IMR-90 (cell line): ENCODE measurements at regions of chr13 and their contacts with region 1.

Region 1: GRCh38 chr13:23871616-23872220 is 17.5 kb downstream of the MIPEP start:
- DNase-seq: peak; percentile 59
- ATAC-seq: no peak
- H3K4me3 ChIP-seq: no peak overlapping the region
- H3K27ac ChIP-seq: peak overlapping the region; percentile 31; the same call in 1 of the 2 replicates
- H3K4me1 ChIP-seq: peaks cover 14% of the 10 kb centered on the region
- H3K27me3 ChIP-seq: no peaks in the 10 kb centered on the region
- CTCF ChIP-seq: peak; percentile 62
- POLR2A ChIP-seq: no peak
- RAD21 ChIP-seq: peak; percentile 76

Region 2: DNA sequence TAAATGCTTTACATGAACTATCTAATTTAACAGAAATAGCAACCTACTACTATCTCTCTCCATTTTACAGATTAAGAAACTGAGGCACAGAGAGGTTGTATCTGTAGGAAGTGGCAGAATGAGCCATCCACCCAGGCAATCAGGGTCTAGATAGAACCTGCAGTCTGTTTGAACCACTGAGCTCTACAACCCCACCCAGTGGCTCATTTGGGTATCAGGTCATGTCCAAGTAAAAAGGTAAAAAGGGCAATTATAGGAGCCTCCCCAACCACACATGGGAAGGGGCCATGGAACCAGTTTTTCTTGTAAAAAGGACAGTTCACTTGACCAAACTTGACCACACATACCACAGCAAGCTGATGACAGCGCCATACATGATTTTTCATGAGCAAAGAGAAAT is 783.8 kb before region 1 on chr13:
- CTCF ChIA-PET with region 1: no interaction called
- POLR2A ChIA-PET with region 1: no interaction called
- dilution Hi-C with region 1: no loop called
- in situ Hi-C with region 1: no loop called
- intact Hi-C with region 1: no loop called
- DNase-seq: peak; percentile 20
- ATAC-seq: peak; percentile 49; the same call in 1 of the 2 replicates
- H3K4me3 ChIP-seq: no peak overlapping the region
- H3K27ac ChIP-seq: no peak overlapping the region
- H3K4me1 ChIP-seq: no peaks in the 10 kb centered on the region
- H3K27me3 ChIP-seq: no peaks in the 10 kb centered on the region
- CTCF ChIP-seq: peak; percentile 31
- POLR2A ChIP-seq: no peak
- RAD21 ChIP-seq: no peak

Region 3: DNA sequence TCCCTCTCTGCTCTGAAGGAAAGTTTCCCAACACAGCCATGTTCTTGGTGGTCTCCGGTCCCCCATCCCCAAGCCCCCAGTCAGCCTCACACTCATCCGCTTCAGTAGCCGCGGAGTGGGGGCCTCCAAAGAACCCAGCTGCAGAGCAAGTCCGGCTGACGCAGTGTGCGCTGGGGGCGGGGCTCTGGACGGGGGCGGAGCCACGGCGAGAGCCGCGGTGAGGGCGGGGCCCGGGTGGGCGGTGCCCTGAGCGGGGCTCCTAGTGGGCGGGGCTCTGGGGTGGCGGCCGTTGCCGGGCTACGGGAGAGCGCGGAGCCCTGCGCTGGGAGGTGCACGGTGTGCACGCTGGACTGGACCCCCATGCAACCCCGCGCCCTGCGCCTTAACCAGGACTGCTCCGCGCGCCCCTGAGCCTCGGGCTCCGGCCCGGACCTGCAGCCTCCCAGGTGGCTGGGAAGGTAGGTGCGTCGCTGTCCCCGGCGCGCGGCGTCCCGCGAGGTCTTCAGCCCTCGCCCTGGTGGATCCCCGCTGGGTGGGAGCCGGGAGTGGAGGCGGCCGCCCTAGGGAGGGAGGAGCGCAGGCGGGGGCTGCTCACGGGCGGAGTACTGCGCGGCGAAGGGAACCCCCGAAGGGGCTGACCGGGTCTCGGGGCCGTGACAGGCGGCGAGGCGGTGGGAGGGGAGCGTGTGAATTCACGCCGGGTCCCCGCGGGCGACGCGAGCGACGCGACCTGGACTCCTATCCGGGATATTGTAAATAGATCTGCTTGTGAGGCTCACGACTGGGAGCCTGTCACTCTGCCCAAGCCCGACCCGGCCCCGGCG is 292.4 kb before region 1 on chr13:
- CTCF ChIA-PET with region 1: interaction called, 3 read pairs
- POLR2A ChIA-PET with region 1: no interaction called
- dilution Hi-C with region 1: no loop called
- in situ Hi-C with region 1: loop called (anchors 10 kb)
- intact Hi-C with region 1: loop called (anchors 1 kb)
- DNase-seq: peak; percentile 87
- ATAC-seq: peak; percentile 98
- H3K4me3 ChIP-seq: peak overlapping the region; percentile 91
- H3K27ac ChIP-seq: peak overlapping the region; percentile 79
- H3K4me1 ChIP-seq: peaks cover 4% of the 10 kb centered on the region
- H3K27me3 ChIP-seq: no peaks in the 10 kb centered on the region
- CTCF ChIP-seq: no peak
- POLR2A ChIP-seq: peak; percentile 26
- RAD21 ChIP-seq: no peak

Region 4: DNA sequence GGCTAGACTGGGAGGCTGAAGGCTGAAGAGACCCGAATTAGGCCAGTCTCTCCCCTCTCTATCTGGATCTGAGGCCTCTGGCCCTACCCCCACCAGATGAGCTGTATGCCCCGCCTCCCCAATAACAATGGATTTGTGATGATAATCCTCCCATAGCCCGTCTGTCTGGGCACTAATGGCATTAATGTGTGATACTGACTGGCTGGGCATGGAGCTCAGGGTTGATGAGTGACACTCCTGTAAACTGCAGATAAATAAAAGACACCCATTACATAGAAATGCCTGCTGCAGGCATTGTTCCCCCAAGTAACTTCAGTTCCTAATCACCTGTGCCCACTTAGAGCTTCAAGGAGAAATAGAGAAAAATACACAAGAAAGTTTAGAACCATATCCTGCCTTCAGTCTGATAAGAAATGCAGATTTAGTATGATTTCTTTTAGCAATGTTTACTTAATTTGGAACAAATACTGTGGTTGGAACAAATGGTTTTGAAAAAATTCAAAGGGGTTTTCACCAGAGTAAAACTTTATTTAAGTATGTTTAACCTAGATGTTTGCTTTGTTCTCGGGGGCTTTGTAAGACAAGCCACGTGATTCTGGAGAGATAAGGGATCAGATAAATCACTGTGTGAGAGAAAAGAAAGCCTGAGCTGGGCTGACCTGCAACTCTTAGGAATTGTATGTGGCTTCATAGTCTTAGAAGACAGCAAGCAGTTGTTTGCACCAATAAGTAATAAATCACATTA is 241.2 kb before region 1 on chr13:
- CTCF ChIA-PET with region 1: no interaction called
- POLR2A ChIA-PET with region 1: interaction called, 19 read pairs
- dilution Hi-C with region 1: no loop called
- in situ Hi-C with region 1: no loop called
- intact Hi-C with region 1: no loop called
- DNase-seq: no peak
- ATAC-seq: no peak
- H3K4me3 ChIP-seq: no peak overlapping the region
- H3K27ac ChIP-seq: no peak overlapping the region
- H3K4me1 ChIP-seq: peaks cover 15% of the 10 kb centered on the region
- H3K27me3 ChIP-seq: no peaks in the 10 kb centered on the region
- CTCF ChIP-seq: no peak
- POLR2A ChIP-seq: no peak
- RAD21 ChIP-seq: no peak

Region 5: DNA sequence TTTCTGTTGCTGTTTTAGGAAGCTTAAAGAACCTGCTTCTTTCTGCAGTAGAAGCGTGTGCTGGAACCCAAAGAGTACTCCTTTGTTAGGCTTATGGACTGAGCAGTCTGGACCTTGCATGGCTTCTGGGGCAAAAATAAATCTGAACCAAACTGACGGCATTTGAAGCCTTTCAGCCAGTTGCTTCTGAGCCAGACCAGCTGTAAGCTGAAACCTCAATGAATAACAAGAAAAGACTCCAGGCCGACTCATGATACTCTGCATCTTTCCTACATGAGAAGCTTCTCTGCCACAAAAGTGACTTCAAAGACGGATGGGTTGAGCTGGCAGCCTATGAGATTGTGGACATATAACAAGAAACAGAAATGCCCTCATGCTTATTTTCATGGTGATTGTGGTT is 198.4 kb before region 1 on chr13:
- CTCF ChIA-PET with region 1: interaction called, 4 read pairs
- POLR2A ChIA-PET with region 1: no interaction called
- dilution Hi-C with region 1: no loop called
- in situ Hi-C with region 1: no loop called
- intact Hi-C with region 1: loop called (anchors 5 kb)
- DNase-seq: peak; percentile 99
- ATAC-seq: peak; percentile 64
- H3K4me3 ChIP-seq: no peak overlapping the region
- H3K27ac ChIP-seq: peak overlapping the region; percentile 100; the same call in 1 of the 2 replicates
- H3K4me1 ChIP-seq: peaks cover 39% of the 10 kb centered on the region
- H3K27me3 ChIP-seq: no peaks in the 10 kb centered on the region
- CTCF ChIP-seq: no peak
- POLR2A ChIP-seq: peak; percentile 88
- RAD21 ChIP-seq: peak; percentile 41

Region 6: GRCh38 chr13:23707674-23708073 is 164.0 kb before region 1 on chr13:
- CTCF ChIA-PET with region 1: interaction called, 3 read pairs
- POLR2A ChIA-PET with region 1: no interaction called
- dilution Hi-C with region 1: no loop called
- in situ Hi-C with region 1: no loop called
- intact Hi-C with region 1: loop called (anchors 1 kb)
- DNase-seq: peak; percentile 49
- ATAC-seq: no peak
- H3K4me3 ChIP-seq: no peak overlapping the region
- H3K27ac ChIP-seq: peak overlapping the region; percentile 5; the same call in 1 of the 2 replicates
- H3K4me1 ChIP-seq: peaks cover 21% of the 10 kb centered on the region
- H3K27me3 ChIP-seq: no peaks in the 10 kb centered on the region
- CTCF ChIP-seq: peak; percentile 52
- POLR2A ChIP-seq: no peak
- RAD21 ChIP-seq: peak; percentile 59

Region 7: GRCh38 chr13:23778002-23778652 is 93.6 kb before region 1 on chr13:
- CTCF ChIA-PET with region 1: no interaction called
- POLR2A ChIA-PET with region 1: no interaction called
- dilution Hi-C with region 1: no loop called
- in situ Hi-C with region 1: no loop called
- intact Hi-C with region 1: loop called (anchors 2 kb)
- DNase-seq: peak; percentile 83
- ATAC-seq: peak; percentile 78
- H3K4me3 ChIP-seq: no peak overlapping the region
- H3K27ac ChIP-seq: peak overlapping the region; percentile 97
- H3K4me1 ChIP-seq: peaks cover 4% of the 10 kb centered on the region
- H3K27me3 ChIP-seq: no peaks in the 10 kb centered on the region
- CTCF ChIP-seq: peak; percentile 35
- POLR2A ChIP-seq: no peak
- RAD21 ChIP-seq: peak; percentile 49

Region 8: DNA sequence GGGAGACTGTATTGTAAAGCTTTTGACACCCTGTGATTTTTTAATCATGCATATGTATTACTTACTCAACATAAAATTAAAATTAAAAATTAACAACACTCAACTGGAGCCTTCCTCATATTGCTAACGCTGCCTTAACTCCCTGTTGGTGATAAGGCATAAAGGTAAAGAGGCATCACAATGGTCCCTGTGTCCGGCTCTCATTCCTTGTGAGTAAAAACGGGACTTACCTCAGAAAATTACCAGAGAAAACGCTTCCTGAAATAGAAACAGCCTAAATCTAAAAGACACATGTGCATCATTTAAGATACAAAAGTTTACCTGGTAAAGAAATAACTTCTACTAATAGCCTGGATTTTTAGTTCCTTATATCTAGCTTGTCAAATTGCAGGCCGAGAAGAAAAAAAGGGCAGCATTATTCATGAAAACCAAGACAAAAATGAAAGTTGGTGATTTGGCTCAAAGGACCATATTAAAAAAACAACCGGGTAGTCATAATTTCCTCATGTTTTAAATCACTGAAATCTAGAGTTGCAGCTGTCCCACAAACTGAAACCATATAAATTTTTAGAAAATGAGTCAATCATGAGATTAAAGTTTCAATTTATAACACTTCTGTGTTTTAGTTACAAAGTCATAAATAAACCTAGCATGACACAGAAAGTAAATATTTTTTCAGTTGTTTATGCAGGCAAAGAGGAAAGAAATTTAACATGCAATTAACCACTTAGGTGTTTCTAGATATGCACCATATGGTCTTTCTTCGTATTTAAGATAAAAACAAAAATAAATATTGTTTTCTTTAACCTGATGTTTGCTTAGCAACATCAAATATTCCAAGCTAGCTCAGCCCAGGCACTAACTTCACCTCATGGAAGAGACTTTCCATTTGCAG is 77.2 kb before region 1 on chr13:
- CTCF ChIA-PET with region 1: interaction called, 3 read pairs
- POLR2A ChIA-PET with region 1: no interaction called
- dilution Hi-C with region 1: no loop called
- in situ Hi-C with region 1: no loop called
- intact Hi-C with region 1: loop called (anchors 5 kb)
- DNase-seq: peak; percentile 85
- ATAC-seq: peak; percentile 24
- H3K4me3 ChIP-seq: no peak overlapping the region
- H3K27ac ChIP-seq: peak overlapping the region; percentile 98
- H3K4me1 ChIP-seq: peaks cover 27% of the 10 kb centered on the region
- H3K27me3 ChIP-seq: no peaks in the 10 kb centered on the region
- CTCF ChIP-seq: no peak
- POLR2A ChIP-seq: no peak
- RAD21 ChIP-seq: no peak